ENCODE measurements at regions of chr1 and their contacts with region 1.

Region 1: GRCh38 chr1:62082456-62083363 is 111.9 kb upstream of the L1TD1 start:
- DNase-seq: peak; percentile 34
- ATAC-seq: peak; percentile 95
- H3K4me3 ChIP-seq: no peak overlapping the region
- H3K27ac ChIP-seq: no peak overlapping the region
- H3K4me1 ChIP-seq: no peaks in the 10 kb centered on the region
- H3K27me3 ChIP-seq: peaks cover 2% of the 10 kb centered on the region; the same call in 1 of the 2 replicates
- CTCF ChIP-seq: peak; percentile 84
- POLR2A ChIP-seq: no peak
- RAD21 ChIP-seq: peak; percentile 56

Region 2: GRCh38 chr1:61995641-61996040 is 87.1 kb before region 1 on chr1:
- CTCF ChIA-PET with region 1: no interaction called
- POLR2A ChIA-PET with region 1: no interaction called
- dilution Hi-C with region 1: no loop called
- in situ Hi-C with region 1: no loop called
- intact Hi-C with region 1: no loop called
- DNase-seq: no peak
- ATAC-seq: no peak
- H3K4me3 ChIP-seq: no peak overlapping the region
- H3K27ac ChIP-seq: no peak overlapping the region
- H3K4me1 ChIP-seq: no peaks in the 10 kb centered on the region
- H3K27me3 ChIP-seq: no peaks in the 10 kb centered on the region
- CTCF ChIP-seq: no peak
- POLR2A ChIP-seq: no peak
- RAD21 ChIP-seq: no peak

Region 3: DNA sequence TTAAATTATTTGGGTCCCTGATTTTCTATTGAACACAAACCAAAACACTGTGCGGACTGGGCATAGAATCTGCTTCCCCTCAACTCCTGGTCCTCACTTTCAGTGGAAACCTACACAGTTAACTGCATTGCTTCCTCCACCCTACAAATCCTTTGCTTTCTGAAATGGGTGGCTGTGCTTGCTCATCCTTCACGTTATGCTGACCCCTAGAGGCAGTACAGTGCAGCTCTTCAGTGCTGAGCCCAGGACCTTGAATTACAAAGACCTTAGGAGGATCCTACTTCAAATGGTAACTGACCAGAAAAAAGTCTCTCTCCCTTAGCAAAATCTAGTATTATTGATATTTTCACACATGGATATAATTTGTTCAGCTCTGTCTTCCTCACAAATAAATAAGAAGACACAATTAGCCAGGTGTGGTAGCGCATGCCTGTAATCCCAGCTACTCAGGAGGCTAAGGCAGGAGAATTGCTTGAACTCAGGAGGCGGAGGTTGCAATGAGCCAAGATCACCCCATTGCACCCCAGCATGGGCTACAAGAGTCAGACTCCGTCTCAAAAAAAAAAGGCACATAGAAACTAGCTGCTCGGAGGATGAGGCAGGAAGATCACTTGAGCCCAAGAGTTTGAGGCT is 48.5 kb after region 1 on chr1:
- CTCF ChIA-PET with region 1: interaction called, 14 read pairs
- POLR2A ChIA-PET with region 1: no interaction called
- dilution Hi-C with region 1: no loop called
- in situ Hi-C with region 1: loop called (anchors 10 kb)
- intact Hi-C with region 1: loop called (anchors 1 kb)
- DNase-seq: peak; percentile 61
- ATAC-seq: peak; percentile 98
- H3K4me3 ChIP-seq: no peak overlapping the region
- H3K27ac ChIP-seq: no peak overlapping the region
- H3K4me1 ChIP-seq: no peaks in the 10 kb centered on the region
- H3K27me3 ChIP-seq: no peaks in the 10 kb centered on the region
- CTCF ChIP-seq: peak; percentile 70
- POLR2A ChIP-seq: no peak
- RAD21 ChIP-seq: peak; percentile 66

Region 4: DNA sequence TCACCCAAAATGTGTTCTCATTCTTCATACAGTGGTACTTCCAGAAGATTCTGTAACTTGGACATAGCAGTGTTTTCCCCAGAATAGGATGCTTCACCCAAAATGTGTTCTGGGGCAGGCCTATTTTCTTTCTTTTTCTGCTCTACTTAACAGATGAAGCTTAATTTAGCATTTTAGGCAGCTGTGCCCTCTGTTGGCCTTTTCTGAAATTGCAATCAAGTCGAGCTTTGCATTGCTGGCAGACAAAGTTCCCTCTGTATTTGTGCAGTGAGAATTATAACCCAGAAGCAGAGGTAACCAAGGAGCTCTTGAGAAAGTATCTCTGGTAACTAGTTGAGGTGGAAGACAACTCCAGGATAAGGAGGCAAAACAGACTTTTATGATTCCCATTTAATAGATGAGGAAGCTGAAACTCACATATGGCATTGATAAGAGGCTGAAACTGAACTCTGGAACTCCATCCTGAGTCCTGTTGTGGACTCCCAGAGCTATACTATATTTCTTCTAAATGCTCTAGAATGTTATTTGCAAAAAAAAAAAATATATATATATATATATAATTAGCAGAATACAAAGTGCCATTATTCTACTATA is 61.6 kb after region 1 on chr1:
- CTCF ChIA-PET with region 1: interaction called, 18 read pairs
- POLR2A ChIA-PET with region 1: no interaction called
- dilution Hi-C with region 1: no loop called
- in situ Hi-C with region 1: loop called (anchors 10 kb)
- intact Hi-C with region 1: loop called (anchors 1 kb)
- DNase-seq: peak; percentile 52
- ATAC-seq: peak; percentile 84
- H3K4me3 ChIP-seq: no peak overlapping the region
- H3K27ac ChIP-seq: no peak overlapping the region
- H3K4me1 ChIP-seq: no peaks in the 10 kb centered on the region
- H3K27me3 ChIP-seq: no peaks in the 10 kb centered on the region
- CTCF ChIP-seq: peak; percentile 67
- POLR2A ChIP-seq: no peak
- RAD21 ChIP-seq: peak; percentile 56

Region 5: DNA sequence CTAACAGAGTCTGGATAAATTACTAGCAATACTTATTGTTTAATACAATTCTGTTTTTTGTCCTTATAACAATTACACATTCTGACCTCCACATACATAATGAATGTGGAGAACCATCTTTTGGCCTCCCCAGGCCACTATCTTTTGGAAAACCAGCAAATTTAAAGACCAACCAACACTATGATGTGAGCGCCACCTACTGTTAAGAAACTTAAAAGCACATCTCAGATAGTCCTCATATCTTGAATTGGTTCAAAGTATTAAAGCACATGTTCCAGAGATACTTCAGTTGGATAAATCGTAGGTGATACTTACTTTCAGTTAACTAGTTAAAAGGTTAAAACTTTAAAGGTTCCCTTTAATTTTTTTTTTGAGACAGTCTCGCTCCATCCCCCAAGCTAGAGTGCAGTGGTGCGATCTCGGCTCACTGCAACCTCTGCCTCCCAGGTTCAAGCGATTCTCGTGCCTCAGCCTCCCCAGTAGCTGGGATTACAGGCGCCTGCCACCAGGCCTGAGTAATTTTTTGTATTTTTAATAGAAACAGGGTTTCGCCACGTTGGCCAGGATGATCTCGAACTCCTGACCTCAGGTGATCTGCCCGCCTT is 324.8 kb after region 1 on chr1:
- CTCF ChIA-PET with region 1: interaction called, 4 read pairs
- POLR2A ChIA-PET with region 1: no interaction called
- dilution Hi-C with region 1: no loop called
- in situ Hi-C with region 1: no loop called
- intact Hi-C with region 1: loop called (anchors 1 kb)
- DNase-seq: peak; percentile 55
- ATAC-seq: peak; percentile 89
- H3K4me3 ChIP-seq: no peak overlapping the region
- H3K27ac ChIP-seq: no peak overlapping the region
- H3K4me1 ChIP-seq: no peaks in the 10 kb centered on the region
- H3K27me3 ChIP-seq: peaks cover 8% of the 10 kb centered on the region
- CTCF ChIP-seq: peak; percentile 79
- POLR2A ChIP-seq: no peak
- RAD21 ChIP-seq: peak; percentile 81

Measured in IMR-90 (cell line).